CD8-positive, alpha-beta T cell (primary cell): ENCODE measurements at regions of chr1 and their contacts with region 1.

Region 1: GRCh38 chr1:26811057-26811456 is 15.4 kb upstream of the ZDHHC18 start:
- DNase-seq: peak in 2 of 9 experiments; percentile 63 to 78
- ATAC-seq: peak; percentile 27
- H3K4me3 ChIP-seq: no peak overlapping the region
- H3K4me3 Mint-ChIP-seq: no peak overlapping the region
- H3K27ac ChIP-seq: peak overlapping the region in 1 of 2 experiments; percentile 64
- H3K27ac Mint-ChIP-seq: peak overlapping the region; percentile 58
- H3K4me1 ChIP-seq: peaks cover 8% of the 10 kb centered on the region
- H3K4me1 Mint-ChIP-seq: peaks cover 14% of the 10 kb centered on the region
- H3K27me3 ChIP-seq: no peaks in the 10 kb centered on the region
- H3K27me3 Mint-ChIP-seq: no peaks in the 10 kb centered on the region
- CTCF ChIP-seq: no peak

Region 2: GRCh38 chr1:26259578-26259977 is 551.5 kb before region 1 on chr1:
- CTCF ChIA-PET with region 1: no interaction called
- POLR2A ChIA-PET with region 1: no interaction called
- intact Hi-C with region 1: no loop called
- DNase-seq: no peak
- ATAC-seq: no peak
- H3K4me3 ChIP-seq: no peak overlapping the region
- H3K4me3 Mint-ChIP-seq: no peak overlapping the region
- H3K27ac ChIP-seq: no peak overlapping the region
- H3K27ac Mint-ChIP-seq: no peak overlapping the region
- H3K4me1 ChIP-seq: no peaks in the 10 kb centered on the region
- H3K4me1 Mint-ChIP-seq: no peaks in the 10 kb centered on the region
- H3K27me3 ChIP-seq: no peaks in the 10 kb centered on the region
- H3K27me3 Mint-ChIP-seq: no peaks in the 10 kb centered on the region
- CTCF ChIP-seq: no peak

Region 3: GRCh38 chr1:26710811-26711210 is 100.2 kb before region 1 on chr1:
- CTCF ChIA-PET with region 1: no interaction called
- POLR2A ChIA-PET with region 1: no interaction called
- intact Hi-C with region 1: no loop called
- DNase-seq: no peak
- ATAC-seq: no peak
- H3K4me3 ChIP-seq: no peak overlapping the region
- H3K4me3 Mint-ChIP-seq: no peak overlapping the region
- H3K27ac ChIP-seq: no peak overlapping the region
- H3K27ac Mint-ChIP-seq: peak overlapping the region; percentile 37
- H3K4me1 ChIP-seq: peaks cover 69% of the 10 kb centered on the region
- H3K4me1 Mint-ChIP-seq: peaks cover 85% of the 10 kb centered on the region
- H3K27me3 ChIP-seq: no peaks in the 10 kb centered on the region
- H3K27me3 Mint-ChIP-seq: no peaks in the 10 kb centered on the region
- CTCF ChIP-seq: no peak

Region 4: DNA sequence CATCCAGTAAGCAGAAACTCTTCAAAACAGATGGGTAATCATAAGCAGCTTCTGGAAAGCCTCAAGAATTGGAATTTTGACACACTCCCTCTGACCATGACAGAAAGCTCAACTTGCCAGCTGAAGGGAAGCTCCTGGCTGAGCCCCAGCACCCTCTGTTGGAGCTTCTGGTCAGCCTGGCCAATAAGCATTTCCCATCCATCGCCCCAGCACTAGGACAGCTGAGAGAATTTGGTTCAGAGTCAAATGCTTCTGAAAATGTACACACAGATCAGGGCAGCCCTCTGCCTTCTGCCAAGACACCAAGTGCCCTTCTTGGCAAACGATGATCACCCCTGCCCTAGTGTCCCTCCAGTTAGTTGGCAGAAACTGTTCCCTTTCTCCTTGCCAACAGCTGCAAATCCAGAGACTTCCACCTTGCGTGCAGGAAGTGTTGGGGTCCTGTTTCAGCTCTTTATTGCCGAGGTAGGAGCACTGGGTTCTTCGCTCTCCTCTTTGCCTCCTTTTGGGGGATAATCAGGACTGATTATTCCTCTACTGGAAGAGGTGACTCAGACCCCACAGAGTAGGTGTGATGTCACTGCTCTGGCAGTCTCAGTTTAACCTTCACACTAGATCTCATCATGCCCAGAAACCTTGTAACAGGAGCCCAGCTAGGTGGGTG is 11.4 kb before region 1 on chr1:
- CTCF ChIA-PET with region 1: interaction called, 41 read pairs
- POLR2A ChIA-PET with region 1: interaction called, 3 read pairs
- intact Hi-C with region 1: no loop called
- DNase-seq: peak in 5 of 9 experiments; percentile 20 to 63 (median 39)
- ATAC-seq: peak; percentile 69
- H3K4me3 ChIP-seq: no peak overlapping the region
- H3K4me3 Mint-ChIP-seq: peak overlapping the region; percentile 73
- H3K27ac ChIP-seq: peak overlapping the region; percentile 26 to 87
- H3K27ac Mint-ChIP-seq: peak overlapping the region; percentile 97
- H3K4me1 ChIP-seq: peaks cover 39% of the 10 kb centered on the region
- H3K4me1 Mint-ChIP-seq: peaks cover 36% of the 10 kb centered on the region
- H3K27me3 ChIP-seq: no peaks in the 10 kb centered on the region
- H3K27me3 Mint-ChIP-seq: no peaks in the 10 kb centered on the region
- CTCF ChIP-seq: no peak

Region 5: GRCh38 chr1:26826261-26827105 is 15.4 kb after region 1 on chr1 and contains the start of gene ZDHHC18:
- CTCF ChIA-PET with region 1: interaction called, 72 read pairs
- POLR2A ChIA-PET with region 1: interaction called, 6 read pairs
- intact Hi-C with region 1: no loop called
- DNase-seq: peak; percentile 48 to 86 (median 69)
- ATAC-seq: peak; percentile 89
- H3K4me3 ChIP-seq: peak within 1 kb of the TSS; percentile 68 to 91
- H3K4me3 Mint-ChIP-seq: peak within 1 kb of the TSS; percentile 94
- H3K27ac ChIP-seq: peak within 1 kb of the TSS; percentile 64 to 91
- H3K27ac Mint-ChIP-seq: peak within 1 kb of the TSS; percentile 96
- H3K4me1 ChIP-seq: peaks cover 50% of the 10 kb centered on the region
- H3K4me1 Mint-ChIP-seq: peaks cover 63% of the 10 kb centered on the region
- H3K27me3 ChIP-seq: no peaks in the 10 kb centered on the region
- H3K27me3 Mint-ChIP-seq: no peaks in the 10 kb centered on the region
- CTCF ChIP-seq: peak; percentile 50
- total RNA-seq, gene ZDHHC18: 55.2 to 55.4 TPM

Region 6: DNA sequence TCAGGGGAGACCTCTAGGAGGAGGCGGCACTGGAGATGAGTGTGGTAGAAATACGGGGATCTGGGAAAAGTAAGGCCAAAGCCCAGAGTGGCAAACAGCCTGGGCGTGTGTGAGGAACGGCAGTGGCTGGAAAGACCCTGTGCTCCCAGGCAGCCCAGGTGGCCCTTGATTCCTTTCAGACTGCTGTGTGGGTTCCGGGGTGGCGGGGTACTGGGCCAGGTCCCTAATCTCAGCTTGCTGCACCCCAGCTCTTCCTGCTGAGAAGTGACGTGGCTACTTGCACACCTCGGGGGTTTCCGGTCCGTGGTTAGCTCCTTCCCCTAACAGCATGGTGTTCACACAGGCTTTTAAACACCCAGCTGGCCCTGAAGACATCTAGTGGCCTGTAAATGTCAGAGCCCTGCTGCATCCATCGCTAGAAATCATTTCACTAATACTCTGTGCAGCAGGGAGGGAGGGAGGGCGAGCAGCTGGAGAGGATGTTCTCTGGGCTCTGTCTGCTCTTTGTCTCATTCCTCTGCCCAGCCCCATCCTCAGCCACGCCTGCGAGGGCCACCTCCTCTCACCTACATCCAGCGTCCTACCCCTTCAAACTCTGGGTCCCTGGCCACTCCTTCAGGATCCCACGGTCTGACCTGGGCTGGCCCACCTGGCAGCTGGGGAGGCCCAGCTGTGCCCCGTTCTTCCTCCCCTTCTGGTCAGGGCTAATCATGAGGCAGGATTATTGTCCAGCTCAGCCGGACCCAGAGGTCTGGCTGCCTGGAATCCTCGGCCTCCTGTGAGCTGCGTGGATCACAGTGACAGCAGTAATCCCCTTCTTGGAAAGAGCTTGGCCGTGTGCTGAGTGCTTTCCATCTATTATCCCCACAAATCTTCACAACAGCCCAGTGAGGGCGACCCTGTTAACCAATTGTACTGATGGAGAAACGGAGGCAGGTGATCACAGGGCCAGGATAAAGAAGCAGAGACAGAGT is 22.7 kb after region 1 on chr1:
- CTCF ChIA-PET with region 1: interaction called, 72 read pairs
- POLR2A ChIA-PET with region 1: interaction called, 7 read pairs
- intact Hi-C with region 1: loop called (anchors 1 kb)
- DNase-seq: peak; percentile 74 to 99 (median 89)
- ATAC-seq: peak; percentile 94
- H3K4me3 ChIP-seq: peak overlapping the region; percentile 27 to 31
- H3K4me3 Mint-ChIP-seq: peak overlapping the region; percentile 73
- H3K27ac ChIP-seq: peak overlapping the region; percentile 88 to 98
- H3K27ac Mint-ChIP-seq: peak overlapping the region; percentile 100
- H3K4me1 ChIP-seq: peaks cover 51% of the 10 kb centered on the region
- H3K4me1 Mint-ChIP-seq: peaks cover 74% of the 10 kb centered on the region
- H3K27me3 ChIP-seq: no peaks in the 10 kb centered on the region
- H3K27me3 Mint-ChIP-seq: no peaks in the 10 kb centered on the region
- CTCF ChIP-seq: peak; percentile 53

Region 7: GRCh38 chr1:26874896-26875295 is 63.8 kb after region 1 on chr1:
- CTCF ChIA-PET with region 1: interaction called, 58 read pairs
- POLR2A ChIA-PET with region 1: no interaction called
- intact Hi-C with region 1: loop called (anchors 1 to 2 kb)
- DNase-seq: no peak
- ATAC-seq: no peak
- H3K4me3 ChIP-seq: no peak overlapping the region
- H3K4me3 Mint-ChIP-seq: no peak overlapping the region
- H3K27ac ChIP-seq: no peak overlapping the region
- H3K27ac Mint-ChIP-seq: no peak overlapping the region
- H3K4me1 ChIP-seq: no peaks in the 10 kb centered on the region
- H3K4me1 Mint-ChIP-seq: no peaks in the 10 kb centered on the region
- H3K27me3 ChIP-seq: no peaks in the 10 kb centered on the region
- H3K27me3 Mint-ChIP-seq: no peaks in the 10 kb centered on the region
- CTCF ChIP-seq: no peak

Region 8: GRCh38 chr1:26882696-26883463 is 71.8 kb after region 1 on chr1:
- CTCF ChIA-PET with region 1: interaction called, 58 read pairs
- POLR2A ChIA-PET with region 1: no interaction called
- intact Hi-C with region 1: loop called in 1 of 2 experiments (anchors 1 kb)
- DNase-seq: no peak
- ATAC-seq: no peak
- H3K4me3 ChIP-seq: no peak overlapping the region
- H3K4me3 Mint-ChIP-seq: no peak overlapping the region
- H3K27ac ChIP-seq: no peak overlapping the region
- H3K27ac Mint-ChIP-seq: no peak overlapping the region
- H3K4me1 ChIP-seq: no peaks in the 10 kb centered on the region
- H3K4me1 Mint-ChIP-seq: peaks cover 18% of the 10 kb centered on the region
- H3K27me3 ChIP-seq: no peaks in the 10 kb centered on the region
- H3K27me3 Mint-ChIP-seq: no peaks in the 10 kb centered on the region
- CTCF ChIP-seq: no peak